Left cardiac atrium (tissue), 4 donors: ENCODE measurements at regions of chr12 and their contacts with region 1.

Region 1: GRCh38 chr12:34236079-34236478 is 213.8 kb downstream of the ALG10 start:
- DNase-seq: no peak
- ATAC-seq: no peak

Region 2: GRCh38 chr12:34198924-34199323 is 37.2 kb before region 1 on chr12:
- intact Hi-C with region 1: no loop called
- DNase-seq: no peak
- ATAC-seq: no peak

Region 3: GRCh38 chr12:34275129-34275528 is 39.0 kb after region 1 on chr12:
- intact Hi-C with region 1: loop called in 1 of 2 experiments (anchors 5 kb)
- DNase-seq: no peak
- ATAC-seq: no peak